ENCODE measurements at regions of chr17 and their contacts with region 1.

Region 1: DNA sequence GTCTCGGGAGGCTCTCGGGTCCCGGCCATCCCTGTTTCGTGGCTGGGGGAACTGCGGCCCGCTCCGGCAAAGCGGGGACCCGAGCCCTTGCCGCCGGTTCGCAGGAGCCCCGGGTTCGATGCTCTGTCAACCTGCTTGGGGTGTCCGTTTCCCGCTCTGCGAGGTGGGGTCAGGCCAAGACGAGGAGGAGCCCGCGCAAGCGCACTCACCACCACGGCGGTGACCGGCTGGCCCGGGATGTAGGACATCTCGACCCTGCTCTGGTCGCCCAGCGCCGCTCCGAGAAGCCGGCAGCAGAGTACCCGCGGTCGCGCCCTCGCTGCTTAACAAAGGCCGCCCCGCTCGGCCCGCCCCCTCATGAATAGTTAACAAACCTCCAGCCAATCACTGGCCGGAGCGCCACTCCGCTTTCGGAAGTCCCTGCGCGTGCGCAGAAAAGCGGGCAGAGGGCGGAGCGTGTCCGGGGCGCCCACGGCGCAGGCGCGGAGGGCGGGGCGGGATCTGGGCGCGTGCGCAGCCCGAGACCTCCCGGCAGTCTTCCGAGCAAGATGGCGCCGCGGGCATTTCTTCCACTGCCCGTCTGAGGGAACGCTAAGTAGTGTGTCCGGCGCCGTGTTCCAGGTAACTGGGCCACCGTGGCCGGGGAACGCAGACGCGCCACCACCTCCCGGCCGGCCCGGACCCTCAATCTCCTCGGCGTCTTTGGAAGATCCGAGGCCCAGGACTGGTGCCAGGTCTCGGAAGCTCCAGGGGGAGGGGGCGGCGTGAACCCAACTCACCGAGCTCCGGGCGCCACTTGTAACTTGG is at the starts of genes EMC6 and TAX1BP3:
- DNase-seq: peak; percentile 97
- H3K4me3 Mint-ChIP-seq: peak within 1 kb of the TSS; percentile 94
- H3K27ac Mint-ChIP-seq: peak within 1 kb of the TSS; percentile 97
- H3K4me1 Mint-ChIP-seq: peaks cover 15% of the 10 kb centered on the region
- H3K27me3 Mint-ChIP-seq: no peaks in the 10 kb centered on the region
- CTCF ChIP-seq: no peak
- total RNA-seq, gene EMC6: 72.2 and 78.5 TPM in 2 replicates
- total RNA-seq, gene TAX1BP3: 130 and 147 TPM in 2 replicates

Region 2: GRCh38 chr17:3048767-3049471 is 619.6 kb before region 1 on chr17:
- CTCF ChIA-PET with region 1: no interaction called
- POLR2A ChIA-PET with region 1: interaction called, 10 read pairs
- intact Hi-C with region 1: no loop called
- DNase-seq: peak; percentile 98
- H3K4me3 Mint-ChIP-seq: peak overlapping the region; percentile 96
- H3K27ac Mint-ChIP-seq: peak overlapping the region; percentile 86
- H3K4me1 Mint-ChIP-seq: peaks cover 5% of the 10 kb centered on the region
- H3K27me3 Mint-ChIP-seq: no peaks in the 10 kb centered on the region
- CTCF ChIP-seq: peak; percentile 86

Region 3: DNA sequence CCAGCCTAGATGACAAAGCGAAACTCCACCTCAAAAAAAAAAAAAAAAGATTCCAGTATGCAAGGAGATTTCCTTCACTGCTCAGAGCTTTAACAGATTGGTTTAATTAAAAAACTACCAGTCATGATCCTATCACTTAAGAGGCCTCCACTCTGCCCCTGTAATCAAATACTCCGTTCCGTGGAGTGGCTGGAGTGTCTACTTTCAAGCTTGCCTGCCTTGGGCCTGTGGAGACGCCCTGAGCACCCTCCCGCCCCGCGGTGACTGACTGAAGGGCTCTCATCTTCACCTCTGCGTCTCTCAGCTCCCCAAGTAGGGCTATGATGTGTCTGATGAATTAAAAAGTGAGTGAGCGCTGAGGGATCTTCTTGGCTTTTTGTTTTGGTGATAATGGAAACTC is 85.6 kb before region 1 on chr17:
- CTCF ChIA-PET with region 1: no interaction called
- POLR2A ChIA-PET with region 1: no interaction called
- intact Hi-C with region 1: no loop called
- DNase-seq: no peak
- H3K4me3 Mint-ChIP-seq: no peak overlapping the region
- H3K27ac Mint-ChIP-seq: no peak overlapping the region
- H3K4me1 Mint-ChIP-seq: no peaks in the 10 kb centered on the region
- H3K27me3 Mint-ChIP-seq: no peaks in the 10 kb centered on the region
- CTCF ChIP-seq: no peak

Region 4: DNA sequence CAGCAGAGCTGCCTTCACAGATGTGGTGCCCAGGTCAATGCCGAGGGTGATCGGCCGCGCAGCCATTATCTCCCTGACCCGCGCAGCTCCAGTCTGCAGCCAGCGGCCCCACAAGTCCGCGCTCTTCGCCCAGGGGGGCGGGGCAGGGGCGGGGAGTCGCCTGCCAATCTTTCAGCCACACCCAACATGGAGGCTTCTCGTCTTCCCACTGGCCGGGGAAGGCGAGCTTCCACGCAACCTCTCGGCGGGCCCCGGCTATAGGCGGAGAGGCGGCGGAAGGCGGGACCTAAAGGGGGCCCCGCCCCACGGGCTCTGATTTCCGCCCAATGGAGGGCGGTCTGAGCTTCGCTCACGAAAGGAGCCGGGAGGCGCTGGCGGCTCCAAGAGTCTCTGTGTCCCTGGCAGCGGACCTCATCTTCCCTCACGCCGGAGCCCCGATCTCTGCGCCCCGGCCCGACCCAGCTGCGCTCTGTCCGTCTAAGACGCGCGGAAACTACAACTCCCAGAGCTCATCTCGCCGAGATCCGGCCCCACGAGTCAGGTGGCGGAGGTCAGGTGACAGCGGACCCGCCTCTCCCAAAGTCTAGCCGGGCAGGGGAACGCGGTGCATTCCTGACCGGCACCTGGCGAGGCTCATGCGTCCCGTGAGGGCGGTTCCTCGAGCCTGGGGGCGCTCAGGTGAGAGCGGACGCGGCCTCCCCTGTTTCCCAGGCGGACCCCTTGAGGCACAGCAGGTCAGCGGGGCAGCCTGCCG is 32.2 kb before region 1 on chr17 and contains the starts of genes CTNS and SHPK:
- CTCF ChIA-PET with region 1: interaction called, 4 read pairs
- POLR2A ChIA-PET with region 1: interaction called, 36 read pairs
- intact Hi-C with region 1: no loop called
- DNase-seq: peak; percentile 98
- H3K4me3 Mint-ChIP-seq: peak within 1 kb of the TSS; percentile 93
- H3K27ac Mint-ChIP-seq: peak within 1 kb of the TSS; percentile 100
- H3K4me1 Mint-ChIP-seq: peaks cover 17% of the 10 kb centered on the region
- H3K27me3 Mint-ChIP-seq: no peaks in the 10 kb centered on the region
- CTCF ChIP-seq: no peak
- total RNA-seq, gene CTNS: 7.1 and 11.4 TPM in 2 replicates
- total RNA-seq, gene SHPK: 6.3 and 8.3 TPM in 2 replicates

Region 5: GRCh38 chr17:3683054-3683511 is 14.6 kb after region 1 on chr17:
- CTCF ChIA-PET with region 1: interaction called, 10 read pairs
- POLR2A ChIA-PET with region 1: interaction called, 17 read pairs
- intact Hi-C with region 1: no loop called
- DNase-seq: peak; percentile 44
- H3K4me3 Mint-ChIP-seq: no peak overlapping the region
- H3K27ac Mint-ChIP-seq: no peak overlapping the region
- H3K4me1 Mint-ChIP-seq: peaks cover 5% of the 10 kb centered on the region
- H3K27me3 Mint-ChIP-seq: no peaks in the 10 kb centered on the region
- CTCF ChIP-seq: peak; percentile 85

Region 6: DNA sequence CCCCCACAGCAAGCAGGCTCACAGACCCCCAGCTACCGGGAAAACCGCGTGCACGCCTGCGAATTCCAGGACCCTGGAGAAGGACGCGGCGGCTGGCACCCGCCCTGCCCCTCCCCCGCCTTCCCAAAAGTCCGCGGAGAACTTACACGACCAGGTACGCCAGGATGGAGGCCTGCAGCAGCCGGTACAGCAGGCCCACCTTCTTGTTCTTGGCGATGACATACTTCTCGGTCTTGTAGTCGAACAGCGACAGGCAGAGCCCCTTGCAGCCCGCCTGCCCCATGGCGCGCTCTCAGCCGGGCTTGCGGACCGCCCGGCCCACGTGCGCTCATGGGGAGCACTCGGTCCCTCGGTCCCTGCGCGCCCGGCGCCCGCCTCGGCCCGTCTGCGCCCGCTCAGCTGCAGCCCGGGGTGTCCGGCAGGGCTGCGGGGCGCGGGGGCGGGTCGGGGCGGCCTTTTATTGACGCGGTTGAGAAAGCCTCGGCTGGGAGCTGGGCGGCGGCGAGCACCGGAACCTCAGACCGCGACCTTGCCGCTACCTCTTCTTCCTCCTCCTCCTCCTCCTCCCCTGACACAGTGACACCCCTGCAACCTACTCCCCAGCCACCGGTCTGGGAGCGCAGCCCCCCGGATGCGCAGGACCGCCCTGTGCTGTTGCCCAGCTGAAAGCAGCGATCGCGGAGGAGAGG is 27.4 kb after region 1 on chr17 and contains the start of gene P2RX5:
- CTCF ChIA-PET with region 1: no interaction called
- POLR2A ChIA-PET with region 1: interaction called, 13 read pairs
- intact Hi-C with region 1: no loop called
- DNase-seq: peak; percentile 29
- H3K4me3 Mint-ChIP-seq: peak within 1 kb of the TSS; percentile 76
- H3K27ac Mint-ChIP-seq: no peak within 1 kb of the TSS
- H3K4me1 Mint-ChIP-seq: no peaks in the 10 kb centered on the region
- H3K27me3 Mint-ChIP-seq: no peaks in the 10 kb centered on the region
- CTCF ChIP-seq: no peak
- total RNA-seq, gene P2RX5: 4.8 and 4.9 TPM in 2 replicates

Region 7: GRCh38 chr17:3723556-3724369 is 55.3 kb after region 1 on chr17 and contains the start of gene HASPIN:
- CTCF ChIA-PET with region 1: no interaction called
- POLR2A ChIA-PET with region 1: interaction called, 27 read pairs
- intact Hi-C with region 1: no loop called
- DNase-seq: peak; percentile 92
- H3K4me3 Mint-ChIP-seq: peak within 1 kb of the TSS; percentile 75
- H3K27ac Mint-ChIP-seq: peak within 1 kb of the TSS; percentile 20
- H3K4me1 Mint-ChIP-seq: peaks cover 33% of the 10 kb centered on the region
- H3K27me3 Mint-ChIP-seq: no peaks in the 10 kb centered on the region
- CTCF ChIP-seq: no peak
- total RNA-seq, gene HASPIN: 3.7 and 6.4 TPM in 2 replicates